Colonic mucosa (tissue), 4 donors: ENCODE measurements at regions of chr9 and their contacts with region 1.

Region 1: GRCh38 chr9:4689687-4690104 is 10.3 kb downstream of the CDC37L1 start:
- DNase-seq: no peak
- H3K4me3 ChIP-seq: no peak overlapping the region
- H3K27ac ChIP-seq: no peak overlapping the region
- H3K4me1 ChIP-seq: no peaks in the 10 kb centered on the region
- H3K27me3 ChIP-seq: no peaks in the 10 kb centered on the region
- CTCF ChIP-seq: no peak

Region 2: DNA sequence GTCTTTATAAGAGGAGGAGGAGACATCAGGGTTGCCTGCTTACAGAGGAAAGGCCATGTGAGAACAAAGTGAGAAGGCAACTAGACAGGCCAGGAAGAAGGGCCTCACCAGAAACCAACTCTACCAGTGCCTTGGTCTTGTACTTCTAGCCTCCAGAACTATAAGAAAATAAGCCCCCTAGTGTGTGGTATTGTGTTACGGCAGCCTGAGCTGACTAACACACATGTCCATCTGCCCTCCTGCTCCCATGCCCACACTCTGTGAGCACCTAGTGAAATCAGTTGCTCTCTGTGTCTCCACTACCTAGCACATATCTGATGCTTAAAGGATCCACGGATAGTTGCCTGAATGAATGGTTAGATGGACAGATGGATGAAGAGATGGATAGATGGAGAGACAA is 44.5 kb after region 1 on chr9:
- intact Hi-C with region 1: loop called (anchors 5 kb)
- DNase-seq: no peak
- H3K4me3 ChIP-seq: no peak overlapping the region
- H3K27ac ChIP-seq: no peak overlapping the region
- H3K4me1 ChIP-seq: no peaks in the 10 kb centered on the region
- H3K27me3 ChIP-seq: no peaks in the 10 kb centered on the region
- CTCF ChIP-seq: no peak